HepG2 (cell line): ENCODE measurements at regions of chr1 and their contacts with region 1.

Region 1: DNA sequence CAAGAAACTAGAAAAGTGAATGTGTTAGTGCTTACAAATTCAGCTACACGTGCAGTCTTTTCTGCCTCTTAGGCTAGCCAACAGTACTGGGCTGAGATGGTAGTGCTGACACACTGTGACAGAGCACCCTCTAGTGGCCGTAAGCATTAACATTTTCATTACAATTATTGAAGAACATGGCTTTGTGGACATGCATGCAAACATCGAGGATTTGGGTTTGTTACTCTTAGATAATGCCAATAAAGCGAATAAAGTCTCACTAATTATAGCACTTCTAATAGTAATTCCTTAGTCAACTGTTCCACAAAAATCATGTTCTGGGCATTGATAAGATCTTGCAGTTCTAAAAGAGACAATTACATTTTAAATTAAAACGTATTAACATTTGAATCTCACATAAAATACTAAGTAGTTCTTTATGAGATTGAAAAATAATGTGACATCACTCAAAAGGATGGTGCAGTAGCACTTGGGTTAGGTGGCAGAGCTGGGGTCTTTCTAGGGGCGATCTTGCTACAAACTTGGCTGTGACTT is 47.1 kb downstream of the MYSM1 start:
- DNase-seq: peak; percentile 64
- ATAC-seq: peak; percentile 93
- H3K4me3 ChIP-seq: no peak overlapping the region
- H3K27ac ChIP-seq: no peak overlapping the region
- H3K4me1 ChIP-seq: no peaks in the 10 kb centered on the region
- H3K27me3 ChIP-seq: no peaks in the 10 kb centered on the region
- CTCF ChIP-seq: peak; percentile 85
- EP300 ChIP-seq: no peak
- POLR2A ChIP-seq: no peak
- RAD21 ChIP-seq: peak; percentile 51; the same call in 1 of the 2 replicates

Region 2: GRCh38 chr1:58515794-58516401 is 136.8 kb before region 1 on chr1:
- CTCF ChIA-PET with region 1: interaction called, 38 read pairs
- POLR2A ChIA-PET with region 1: no interaction called
- in situ Hi-C with region 1: loop called (anchors 5 kb)
- intact Hi-C with region 1: no loop called
- DNase-seq: peak; percentile 72
- ATAC-seq: peak; percentile 53; the same call in 1 of the 3 replicates
- H3K4me3 ChIP-seq: no peak overlapping the region
- H3K27ac ChIP-seq: no peak overlapping the region
- H3K4me1 ChIP-seq: no peaks in the 10 kb centered on the region
- H3K27me3 ChIP-seq: no peaks in the 10 kb centered on the region
- CTCF ChIP-seq: peak; percentile 71
- EP300 ChIP-seq: no peak
- POLR2A ChIP-seq: no peak
- RAD21 ChIP-seq: peak; percentile 61; the same call in 1 of the 2 replicates

Region 3: GRCh38 chr1:58699011-58699762 is 46.5 kb after region 1 on chr1:
- CTCF ChIA-PET with region 1: no interaction called
- POLR2A ChIA-PET with region 1: no interaction called
- in situ Hi-C with region 1: no loop called
- intact Hi-C with region 1: no loop called
- DNase-seq: no peak
- ATAC-seq: peak; percentile 22
- H3K4me3 ChIP-seq: peak overlapping the region; percentile 73 to 96 (median 89)
- H3K27ac ChIP-seq: peak overlapping the region; percentile 77
- H3K4me1 ChIP-seq: peaks cover 41% of the 10 kb centered on the region
- H3K27me3 ChIP-seq: no peaks in the 10 kb centered on the region; a peak in 1 of 5 replicates
- CTCF ChIP-seq: no peak
- EP300 ChIP-seq: no peak
- POLR2A ChIP-seq: no peak
- RAD21 ChIP-seq: no peak